HEK293T (cell line): ENCODE measurements at regions of chr12 and their contacts with region 1.

Region 1: DNA sequence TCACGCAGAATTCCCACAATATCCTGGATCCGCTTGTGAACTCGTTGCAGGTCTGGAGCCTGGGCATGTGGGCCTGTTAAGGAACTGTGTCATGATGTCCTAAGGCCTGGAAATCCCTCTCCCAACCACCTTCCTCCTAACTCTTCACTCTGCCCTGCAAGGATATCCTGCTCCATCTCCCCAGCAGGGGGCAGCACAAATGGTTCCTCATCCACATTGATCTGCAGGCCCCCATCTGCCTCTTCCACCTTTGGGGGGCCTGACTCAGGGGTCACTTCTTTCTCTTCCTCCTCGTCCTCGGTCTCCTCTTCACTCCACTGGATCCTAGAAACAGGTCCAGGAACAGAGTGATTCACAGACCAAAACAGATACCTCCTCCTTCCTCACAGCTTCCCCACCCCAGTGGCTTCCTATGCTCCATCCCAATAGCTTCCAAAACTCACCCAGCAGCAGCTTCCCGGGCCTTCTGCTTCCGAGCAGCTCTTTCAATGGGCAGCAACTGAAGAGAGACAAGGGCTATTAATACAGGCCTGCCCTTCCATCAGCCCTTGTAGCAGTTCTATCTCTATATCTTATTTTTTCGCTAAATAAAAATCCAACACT is 4.5 kb downstream of the NOP2 start:
- DNase-seq: peak; percentile 59

Region 2: DNA sequence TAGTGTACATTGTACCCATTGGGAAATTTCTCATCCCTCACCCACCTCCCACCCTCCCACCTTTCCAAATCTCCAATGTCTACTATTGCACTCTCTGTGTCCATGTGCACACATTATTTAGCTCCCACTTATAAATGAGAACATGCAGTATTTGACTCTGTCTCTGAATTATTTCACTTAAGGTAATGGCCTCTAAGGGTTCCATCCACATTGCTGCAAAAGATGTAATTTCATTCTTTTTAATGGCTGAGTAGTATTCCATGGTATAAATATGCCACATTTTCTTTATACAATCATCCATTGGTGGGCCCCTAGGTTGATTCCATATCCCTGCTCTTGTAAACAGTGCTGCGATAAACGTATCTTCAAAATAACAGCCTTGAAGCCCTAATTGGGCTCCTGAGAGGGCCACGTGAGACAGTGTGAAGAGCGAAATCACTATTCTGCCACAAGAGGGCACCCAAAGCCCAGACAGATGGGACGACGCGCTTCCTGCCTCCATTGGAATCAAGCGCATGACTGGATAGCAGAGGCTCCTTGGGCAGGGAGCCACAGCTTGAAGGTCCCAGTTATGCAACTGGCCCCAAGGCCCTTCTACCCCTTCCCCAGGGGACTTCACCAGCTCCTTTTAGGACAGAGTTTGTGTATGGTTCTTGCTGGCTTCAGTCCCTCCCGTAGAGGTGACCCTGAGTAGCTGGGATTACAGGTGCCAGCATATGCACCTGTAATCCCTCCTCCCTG is 140.1 kb before region 1 on chr12:
- CTCF ChIA-PET with region 1: no interaction called
- POLR2A ChIA-PET with region 1: no interaction called
- DNase-seq: peak; percentile 88

Region 3: DNA sequence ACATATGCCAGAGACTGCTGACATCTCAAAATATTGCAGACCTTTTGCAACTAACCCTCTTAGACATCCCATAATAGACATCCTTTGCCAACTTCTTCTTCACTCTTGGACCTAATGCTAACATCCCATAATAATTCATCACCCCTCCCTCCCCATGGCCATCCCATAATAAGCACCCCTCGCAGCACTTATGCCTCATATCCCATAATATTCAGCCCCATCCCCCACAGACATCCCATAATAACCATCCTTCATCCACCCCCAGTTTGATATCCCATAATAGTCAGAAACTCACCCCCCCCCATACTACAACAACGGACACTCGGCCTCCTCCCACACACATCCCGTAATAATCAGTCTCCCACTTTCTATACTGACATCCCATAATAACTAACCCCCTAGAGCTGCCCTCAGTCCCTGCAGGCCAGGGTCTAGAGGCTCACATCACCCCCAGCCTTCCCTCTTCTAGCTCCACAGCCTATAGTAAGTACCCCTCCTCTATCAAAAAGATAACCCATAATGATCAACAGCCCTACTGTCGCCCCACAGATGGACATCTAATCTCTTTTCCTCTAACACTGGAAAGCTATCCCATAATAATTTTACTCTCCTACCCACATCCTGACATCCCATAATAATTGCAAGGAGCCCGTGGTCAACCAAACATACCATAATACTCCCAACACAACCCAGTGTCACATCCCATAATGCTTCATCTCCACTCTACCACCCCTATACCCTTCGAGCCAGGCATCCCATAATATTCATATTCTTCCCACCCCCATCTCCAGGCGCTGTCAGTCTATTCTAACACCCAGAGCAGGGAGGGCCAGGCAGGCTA is 44.4 kb after region 1 on chr12:
- CTCF ChIA-PET with region 1: interaction called, 8 read pairs
- POLR2A ChIA-PET with region 1: interaction called, 10 read pairs
- DNase-seq: peak; percentile 42